Activated CD4-positive, alpha-beta T cell treated with anti-CD3 and anti-CD28 coated beads for 36 hours (primary cell): ENCODE measurements at regions of chr7 and their contacts with region 1.

Region 1: DNA sequence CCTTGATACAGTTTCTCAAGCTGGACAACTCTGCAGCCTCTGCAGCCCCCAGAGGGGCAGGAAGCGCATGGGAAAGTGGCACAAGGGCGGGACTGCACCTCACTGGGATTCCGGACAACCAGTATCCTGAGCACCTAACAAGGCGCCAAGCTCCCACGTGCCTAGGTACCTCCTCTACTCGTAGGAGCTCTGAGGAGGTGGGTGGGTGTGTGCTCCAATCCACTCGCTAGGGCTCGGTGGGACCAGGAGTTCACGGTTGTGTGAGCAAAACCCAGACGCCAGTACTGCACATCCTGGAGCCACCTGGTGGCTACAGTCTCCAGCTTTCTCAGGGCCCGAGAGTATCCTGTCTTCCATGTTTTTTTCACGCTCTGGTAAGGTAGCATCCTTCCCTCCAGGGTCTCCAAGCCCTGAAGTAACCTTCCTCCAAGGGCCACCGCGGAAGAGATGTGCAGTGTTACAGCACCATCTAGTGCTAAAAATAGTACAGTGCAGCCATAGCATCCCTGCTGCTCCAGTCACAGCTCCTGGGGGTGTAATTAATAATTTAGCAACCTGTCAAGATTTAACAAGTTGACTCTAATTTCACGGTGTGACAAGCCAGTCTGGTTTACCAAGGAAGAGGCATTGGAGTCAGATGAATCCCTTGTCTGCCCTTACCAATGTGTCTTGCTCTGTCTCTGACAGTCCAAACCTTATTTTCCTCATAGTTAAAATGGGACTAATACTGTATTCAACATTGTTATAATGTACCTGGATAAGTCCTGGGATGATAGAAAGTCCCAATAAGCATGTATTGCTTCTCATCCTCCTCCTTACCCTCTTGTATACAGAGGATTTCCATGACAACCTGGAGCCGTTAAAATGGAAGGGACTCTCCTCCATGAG is 70.4 kb downstream of the HERPUD2 start:
- DNase-seq: peak; percentile 54
- ATAC-seq: peak; percentile 95
- H3K4me3 Mint-ChIP-seq: no peak overlapping the region
- H3K27ac Mint-ChIP-seq: no peak overlapping the region
- H3K4me1 Mint-ChIP-seq: peaks cover 2% of the 10 kb centered on the region
- H3K27me3 Mint-ChIP-seq: no peaks in the 10 kb centered on the region

Region 2: DNA sequence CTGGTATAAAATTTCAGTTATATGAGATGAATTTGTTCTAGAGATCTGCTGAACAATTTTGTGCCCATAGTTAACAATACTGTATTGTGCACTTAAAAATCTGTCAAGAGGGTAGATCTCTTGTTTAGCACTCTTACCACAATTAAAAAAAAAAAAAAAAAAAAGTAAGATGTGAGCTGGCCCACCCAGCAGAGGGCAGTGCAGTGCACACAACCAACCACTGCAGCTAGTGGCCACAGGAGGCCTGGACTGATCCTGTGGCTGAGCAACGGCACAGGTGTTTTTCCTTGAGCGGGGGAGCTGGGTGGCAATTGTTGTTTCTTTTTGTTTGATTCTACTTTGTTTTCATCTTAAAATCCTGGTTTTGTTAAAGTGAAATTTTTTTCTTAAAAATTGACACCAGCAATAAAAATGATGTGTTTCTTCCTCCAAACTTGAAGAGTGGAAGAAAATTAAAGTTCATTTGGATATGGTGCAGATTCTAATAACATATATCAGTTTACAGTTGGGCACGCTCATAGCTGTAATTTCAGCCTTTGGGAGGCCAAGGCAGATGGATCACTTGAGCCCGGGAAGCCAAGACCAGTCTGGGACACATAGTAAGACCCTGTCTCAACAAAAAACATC is 199.6 kb before region 1 on chr7:
- CTCF ChIA-PET with region 1: interaction called, 35 read pairs
- POLR2A ChIA-PET with region 1: no interaction called
- intact Hi-C with region 1: loop called (anchors 1 kb)
- DNase-seq: peak; percentile 75
- ATAC-seq: peak; percentile 74
- H3K4me3 Mint-ChIP-seq: no peak overlapping the region
- H3K27ac Mint-ChIP-seq: no peak overlapping the region
- H3K4me1 Mint-ChIP-seq: peaks cover 5% of the 10 kb centered on the region
- H3K27me3 Mint-ChIP-seq: peaks cover 3% of the 10 kb centered on the region

Region 3: DNA sequence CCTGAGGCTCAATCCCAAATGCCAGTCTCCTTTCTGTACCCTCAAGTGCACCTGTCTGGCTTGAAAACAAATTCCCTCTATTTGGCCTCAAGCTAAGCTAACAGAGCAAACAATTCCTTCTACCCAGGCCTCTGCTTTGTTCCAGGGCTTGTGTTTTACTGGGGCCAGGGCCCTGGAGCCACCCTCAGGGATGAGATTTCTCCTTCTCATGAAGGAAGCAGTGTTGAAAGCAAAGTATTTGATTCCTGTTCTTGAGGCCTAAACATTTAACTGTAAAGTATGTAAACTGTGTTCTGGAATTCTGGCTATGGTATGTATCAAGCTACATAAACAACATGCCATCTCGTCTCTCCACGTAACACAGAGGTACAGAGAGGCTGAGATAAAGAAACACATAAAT is 11.4 kb before region 1 on chr7:
- CTCF ChIA-PET with region 1: interaction called, 16 read pairs
- POLR2A ChIA-PET with region 1: no interaction called
- intact Hi-C with region 1: no loop called
- DNase-seq: no peak
- ATAC-seq: no peak
- H3K4me3 Mint-ChIP-seq: no peak overlapping the region
- H3K27ac Mint-ChIP-seq: no peak overlapping the region
- H3K4me1 Mint-ChIP-seq: no peaks in the 10 kb centered on the region
- H3K27me3 Mint-ChIP-seq: no peaks in the 10 kb centered on the region

Region 4: DNA sequence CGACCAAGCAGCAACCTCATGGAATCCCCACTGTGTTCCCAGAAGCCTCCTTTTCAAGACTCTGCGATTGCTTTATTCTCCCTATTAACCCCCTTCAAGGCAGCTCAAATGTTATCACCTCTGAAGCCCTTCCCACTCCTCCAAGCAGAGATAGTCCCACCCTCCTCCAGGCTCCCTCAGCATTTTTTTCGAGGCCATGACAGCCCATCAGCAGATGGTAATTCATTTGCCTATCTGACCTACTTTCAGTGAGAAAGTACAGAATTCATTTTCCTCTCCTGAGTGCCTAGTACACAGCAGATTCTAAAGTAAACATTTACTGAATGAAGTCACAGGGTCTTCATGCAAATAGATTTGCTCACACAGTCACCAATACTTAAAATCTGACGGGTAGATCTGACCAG is 22.6 kb after region 1 on chr7:
- CTCF ChIA-PET with region 1: interaction called, 32 read pairs
- POLR2A ChIA-PET with region 1: no interaction called
- intact Hi-C with region 1: no loop called
- DNase-seq: no peak
- ATAC-seq: peak; percentile 12
- H3K4me3 Mint-ChIP-seq: no peak overlapping the region
- H3K27ac Mint-ChIP-seq: no peak overlapping the region
- H3K4me1 Mint-ChIP-seq: peaks cover 54% of the 10 kb centered on the region
- H3K27me3 Mint-ChIP-seq: no peaks in the 10 kb centered on the region